H1 (cell line): ENCODE measurements at regions of chr20 and their contacts with region 1.

Region 1: DNA sequence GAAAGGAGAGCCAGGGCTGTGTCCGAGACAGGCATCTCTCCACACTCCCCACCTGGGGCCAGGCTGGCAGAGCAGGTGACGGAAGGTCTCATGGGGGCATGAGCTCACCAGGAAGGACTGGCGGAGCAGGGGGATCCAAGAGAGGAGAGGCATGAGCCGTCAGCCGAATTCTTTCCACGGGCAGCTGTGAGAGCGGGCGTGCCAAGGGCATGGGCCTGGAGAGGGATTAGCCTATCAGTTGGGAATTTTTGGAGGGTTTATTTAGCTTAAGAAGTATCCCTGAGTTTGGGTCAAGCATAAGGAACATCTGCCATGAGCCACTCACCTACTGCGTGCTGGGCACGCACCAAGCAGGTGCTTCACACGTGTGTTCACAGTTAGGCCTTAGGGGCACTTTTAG is 60.2 kb upstream of the ZNFX1 start:
- DNase-seq: no peak
- H3K4me3 ChIP-seq: no peak overlapping the region
- H3K27ac ChIP-seq: no peak overlapping the region
- H3K4me1 ChIP-seq: no peaks in the 10 kb centered on the region
- H3K27me3 ChIP-seq: no peaks in the 10 kb centered on the region
- CTCF ChIP-seq: no peak
- EP300 ChIP-seq: no peak
- POLR2A ChIP-seq: no peak
- RAD21 ChIP-seq: no peak

Region 2: DNA sequence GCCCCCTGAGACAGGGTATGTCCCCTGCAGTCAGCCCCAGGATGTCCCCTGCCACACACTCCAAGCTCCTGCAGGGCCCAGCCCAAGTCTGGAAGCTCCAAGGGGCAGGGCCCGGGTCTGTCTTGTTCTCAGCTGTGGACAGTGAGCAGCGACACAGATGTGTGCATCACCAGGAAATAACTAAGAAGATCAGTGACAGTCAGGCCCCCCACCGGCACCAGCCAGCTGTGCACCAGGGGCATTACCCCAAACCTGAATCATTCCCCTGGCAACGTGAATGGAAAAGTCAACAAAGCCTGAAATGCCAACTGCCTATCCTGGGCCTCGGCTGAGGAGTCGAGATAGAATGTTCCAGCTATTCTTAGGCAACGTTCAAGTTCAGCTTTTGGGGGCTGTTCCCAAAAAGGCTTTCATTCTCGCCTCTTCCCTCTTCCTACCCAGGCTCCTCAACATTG is 615.3 kb before region 1 on chr20:
- CTCF ChIA-PET with region 1: no interaction called
- POLR2A ChIA-PET with region 1: no interaction called
- DNase-seq: no peak
- H3K4me3 ChIP-seq: no peak overlapping the region
- H3K27ac ChIP-seq: no peak overlapping the region
- H3K4me1 ChIP-seq: peaks cover 0 to 9% (median 3%) of the 10 kb centered on the region in 4 experiments; a peak in 4 of 7 replicates
- H3K27me3 ChIP-seq: no peaks in the 10 kb centered on the region; a peak in 1 of 7 replicates
- CTCF ChIP-seq: no peak
- EP300 ChIP-seq: no peak
- POLR2A ChIP-seq: no peak
- RAD21 ChIP-seq: no peak

Region 3: GRCh38 chr20:49140834-49141233 is 197.2 kb before region 1 on chr20:
- CTCF ChIA-PET with region 1: no interaction called
- POLR2A ChIA-PET with region 1: no interaction called
- DNase-seq: no peak
- H3K4me3 ChIP-seq: no peak overlapping the region
- H3K27ac ChIP-seq: no peak overlapping the region
- H3K4me1 ChIP-seq: no peaks in the 10 kb centered on the region
- H3K27me3 ChIP-seq: no peaks in the 10 kb centered on the region
- CTCF ChIP-seq: no peak
- EP300 ChIP-seq: no peak
- POLR2A ChIP-seq: no peak
- RAD21 ChIP-seq: no peak

Region 4: DNA sequence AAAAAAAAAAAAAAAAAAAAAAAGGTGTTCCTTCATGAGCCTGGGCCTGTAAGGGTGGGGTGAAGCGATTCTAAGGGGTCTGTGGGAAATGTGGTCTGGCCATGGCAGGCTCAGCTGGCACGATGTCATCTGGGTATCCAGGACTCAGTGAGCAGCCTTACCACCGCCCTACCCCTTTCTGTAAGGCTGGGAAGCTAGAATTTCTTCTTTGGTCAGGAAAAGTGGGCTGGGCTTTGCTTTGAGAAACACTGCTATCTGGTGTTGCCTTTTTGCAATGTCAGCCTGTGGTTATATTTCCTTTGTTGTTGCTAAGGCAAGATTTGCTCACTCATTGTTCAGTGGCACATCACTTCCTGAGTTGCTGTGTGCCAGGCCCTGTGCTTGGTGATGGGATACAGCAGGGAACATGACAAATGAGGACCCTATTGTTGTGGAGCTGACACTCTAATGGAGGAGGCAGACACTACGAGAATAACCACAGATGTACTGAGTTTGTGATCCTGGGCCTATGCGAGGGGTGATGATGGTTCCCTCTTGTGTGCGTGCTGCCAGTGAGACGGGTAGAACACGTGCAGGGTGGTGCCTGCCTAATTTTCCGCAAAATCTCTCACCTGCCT is 14.3 kb before region 1 on chr20:
- CTCF ChIA-PET with region 1: interaction called, 60 read pairs
- POLR2A ChIA-PET with region 1: interaction called, 4 read pairs
- DNase-seq: no peak
- H3K4me3 ChIP-seq: no peak overlapping the region
- H3K27ac ChIP-seq: no peak overlapping the region
- H3K4me1 ChIP-seq: peaks cover 0 to 12% (median 2%) of the 10 kb centered on the region in 4 experiments; a peak in 5 of 7 replicates
- H3K27me3 ChIP-seq: peaks cover 2 to 12% (median 11%) of the 10 kb centered on the region in 4 experiments
- CTCF ChIP-seq: peak in 2 of 3 experiments; percentile 35 to 37; a peak in 3 of 4 replicates
- EP300 ChIP-seq: no peak
- POLR2A ChIP-seq: no peak
- RAD21 ChIP-seq: peak; percentile 46 to 58

Region 5: GRCh38 chr20:49367113-49367512 is 29.1 kb after region 1 on chr20:
- CTCF ChIA-PET with region 1: interaction called, 33 read pairs
- POLR2A ChIA-PET with region 1: no interaction called
- DNase-seq: no peak
- H3K4me3 ChIP-seq: no peak overlapping the region
- H3K27ac ChIP-seq: no peak overlapping the region
- H3K4me1 ChIP-seq: no peaks in the 10 kb centered on the region; a peak in 1 of 7 replicates
- H3K27me3 ChIP-seq: 0 out of 7 replicates have a peak, but pooled peaks cover 0 to 1% (median 0%) of the 10 kb centered on the region in 4 experiments
- CTCF ChIP-seq: no peak
- EP300 ChIP-seq: no peak
- POLR2A ChIP-seq: no peak
- RAD21 ChIP-seq: no peak

Region 6: GRCh38 chr20:49476016-49476355 is 137.9 kb after region 1 on chr20:
- CTCF ChIA-PET with region 1: interaction called, 126 read pairs
- POLR2A ChIA-PET with region 1: no interaction called
- DNase-seq: no peak
- H3K4me3 ChIP-seq: no peak overlapping the region
- H3K27ac ChIP-seq: no peak overlapping the region
- H3K4me1 ChIP-seq: no peaks in the 10 kb centered on the region; a peak in 1 of 7 replicates
- H3K27me3 ChIP-seq: no peaks in the 10 kb centered on the region; a peak in 1 of 7 replicates
- CTCF ChIP-seq: no peak
- EP300 ChIP-seq: no peak
- POLR2A ChIP-seq: no peak
- RAD21 ChIP-seq: no peak

Region 7: DNA sequence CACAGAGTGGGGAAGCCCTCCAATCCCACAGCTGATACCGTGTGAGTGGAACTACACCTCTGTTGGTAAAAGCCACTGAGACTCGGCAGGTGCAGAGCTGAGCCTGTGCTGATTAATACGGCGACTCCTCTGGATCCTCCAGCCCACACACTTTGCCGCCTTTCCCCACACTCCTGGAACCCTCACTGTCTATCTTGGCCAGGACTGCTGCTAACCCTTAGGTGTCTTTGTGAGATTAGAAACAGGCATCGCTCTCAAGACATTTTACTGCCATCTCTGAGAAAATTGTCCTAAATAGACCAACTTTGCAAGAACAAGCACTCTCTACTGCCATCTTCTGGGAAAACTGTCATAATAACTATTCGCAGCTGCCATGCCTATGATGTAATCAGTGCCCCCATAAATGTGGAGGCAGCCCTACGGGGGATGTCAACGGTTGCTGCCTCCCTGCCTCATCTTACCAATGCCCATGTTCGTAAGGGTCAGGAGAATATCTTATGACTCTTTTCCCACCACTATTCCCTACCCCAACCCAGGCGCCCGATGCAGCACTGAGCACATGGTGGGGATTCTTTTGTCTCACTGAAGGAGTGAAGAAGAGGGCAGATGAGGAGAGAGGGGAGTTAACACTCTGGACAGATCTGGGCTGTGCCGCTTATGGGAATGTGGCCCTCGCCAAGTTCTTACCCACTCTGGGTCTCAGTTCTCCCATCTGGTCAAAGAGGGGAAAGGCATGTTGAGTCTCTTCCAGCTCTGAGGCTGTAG is 170.6 kb after region 1 on chr20:
- CTCF ChIA-PET with region 1: interaction called, 82 read pairs
- POLR2A ChIA-PET with region 1: interaction called, 3 read pairs
- DNase-seq: no peak
- H3K4me3 ChIP-seq: no peak overlapping the region
- H3K27ac ChIP-seq: no peak overlapping the region
- H3K4me1 ChIP-seq: no peaks in the 10 kb centered on the region
- H3K27me3 ChIP-seq: no peaks in the 10 kb centered on the region
- CTCF ChIP-seq: peak in 2 of 3 experiments; percentile 63 to 67; a peak in 3 of 4 replicates
- EP300 ChIP-seq: no peak
- POLR2A ChIP-seq: no peak
- RAD21 ChIP-seq: peak; percentile 62 to 73

Region 8: GRCh38 chr20:49541733-49542513 is 203.9 kb after region 1 on chr20:
- CTCF ChIA-PET with region 1: interaction called, 15 read pairs
- POLR2A ChIA-PET with region 1: interaction called, 3 read pairs
- DNase-seq: peak in 1 of 2 experiments; percentile 86
- H3K4me3 ChIP-seq: no peak overlapping the region
- H3K27ac ChIP-seq: no peak overlapping the region
- H3K4me1 ChIP-seq: no peaks in the 10 kb centered on the region
- H3K27me3 ChIP-seq: no peaks in the 10 kb centered on the region
- CTCF ChIP-seq: peak; percentile 60 to 99 (median 90)
- EP300 ChIP-seq: no peak
- POLR2A ChIP-seq: no peak
- RAD21 ChIP-seq: peak; percentile 93 to 94